HAP-1 (cell line): ENCODE measurements at regions of chr18 and their contacts with region 1.

Region 1: DNA sequence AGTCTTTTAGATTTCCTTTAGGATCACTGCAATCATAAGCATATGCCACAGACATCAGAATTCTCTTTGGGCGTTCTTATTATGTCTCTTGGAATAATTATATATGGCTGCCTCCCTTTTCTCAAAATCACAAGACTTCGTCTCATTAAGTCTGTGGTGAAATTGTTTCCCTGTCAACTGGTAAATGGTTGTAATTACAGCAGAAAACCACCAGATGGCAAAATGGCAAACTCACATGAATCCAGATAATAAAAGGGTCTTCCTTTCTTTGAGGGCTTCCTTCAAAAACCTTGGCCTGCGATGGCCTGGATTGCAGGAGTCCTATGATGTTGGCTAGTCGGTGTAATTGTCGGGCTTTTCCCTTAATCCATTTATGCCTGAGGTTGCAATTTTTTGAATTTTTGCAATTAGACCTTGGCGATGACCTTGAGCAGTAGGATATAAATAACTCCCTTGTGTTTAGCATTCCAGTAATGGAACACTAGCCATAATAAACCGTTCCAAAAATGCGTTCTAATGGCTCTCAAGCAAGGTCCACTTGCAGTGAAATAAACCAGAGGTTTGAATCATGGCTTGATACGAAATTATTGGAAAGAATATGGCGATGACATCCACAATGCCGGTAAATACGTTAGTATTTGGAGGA is 656.4 kb downstream of the MBD2 start:
- DNase-seq: peak; percentile 10 to 58
- H3K4me3 ChIP-seq: no peak overlapping the region
- H3K4me1 ChIP-seq: no peaks in the 10 kb centered on the region
- H3K27me3 ChIP-seq: no peaks in the 10 kb centered on the region

Region 2: GRCh38 chr18:54127759-54128378 is 559.8 kb after region 1 on chr18:
- in situ Hi-C with region 1: loop called (anchors 25 kb)
- DNase-seq: peak; percentile 56 to 68
- H3K4me3 ChIP-seq: no peak overlapping the region
- H3K4me1 ChIP-seq: peaks cover 18% of the 10 kb centered on the region
- H3K27me3 ChIP-seq: no peaks in the 10 kb centered on the region